BJ (cell line): ENCODE measurements at regions of chr2 and their contacts with region 1.

Region 1: GRCh38 chr2:11719230-11719977 is 27.0 kb upstream of the LPIN1 start:
- DNase-seq: no peak
- H3K4me3 ChIP-seq: no peak overlapping the region
- H3K27me3 ChIP-seq: peaks cover 16% of the 10 kb centered on the region
- CTCF ChIP-seq: no peak

Region 2: GRCh38 chr2:10533811-10534321 is 1185.5 kb before region 1 on chr2:
- CTCF ChIA-PET with region 1: no interaction called
- POLR2A ChIA-PET with region 1: no interaction called
- DNase-seq: no peak
- H3K4me3 ChIP-seq: no peak overlapping the region
- H3K27me3 ChIP-seq: no peaks in the 10 kb centered on the region
- CTCF ChIP-seq: no peak

Region 3: GRCh38 chr2:11610624-11611242 is 108.7 kb before region 1 on chr2:
- CTCF ChIA-PET with region 1: no interaction called
- POLR2A ChIA-PET with region 1: no interaction called
- DNase-seq: no peak
- H3K4me3 ChIP-seq: no peak overlapping the region
- H3K27me3 ChIP-seq: no peaks in the 10 kb centered on the region
- CTCF ChIP-seq: no peak

Region 4: GRCh38 chr2:11701751-11702301 is 17.6 kb before region 1 on chr2:
- CTCF ChIA-PET with region 1: no interaction called
- POLR2A ChIA-PET with region 1: no interaction called
- DNase-seq: no peak
- H3K4me3 ChIP-seq: no peak overlapping the region
- H3K27me3 ChIP-seq: no peaks in the 10 kb centered on the region
- CTCF ChIP-seq: no peak

Region 5: GRCh38 chr2:11784747-11785610 is 65.6 kb after region 1 on chr2:
- CTCF ChIA-PET with region 1: interaction called, 13 read pairs
- POLR2A ChIA-PET with region 1: no interaction called
- DNase-seq: no peak
- H3K4me3 ChIP-seq: peak overlapping the region; percentile 31
- H3K27me3 ChIP-seq: no peaks in the 10 kb centered on the region
- CTCF ChIP-seq: peak; percentile 99

Region 6: DNA sequence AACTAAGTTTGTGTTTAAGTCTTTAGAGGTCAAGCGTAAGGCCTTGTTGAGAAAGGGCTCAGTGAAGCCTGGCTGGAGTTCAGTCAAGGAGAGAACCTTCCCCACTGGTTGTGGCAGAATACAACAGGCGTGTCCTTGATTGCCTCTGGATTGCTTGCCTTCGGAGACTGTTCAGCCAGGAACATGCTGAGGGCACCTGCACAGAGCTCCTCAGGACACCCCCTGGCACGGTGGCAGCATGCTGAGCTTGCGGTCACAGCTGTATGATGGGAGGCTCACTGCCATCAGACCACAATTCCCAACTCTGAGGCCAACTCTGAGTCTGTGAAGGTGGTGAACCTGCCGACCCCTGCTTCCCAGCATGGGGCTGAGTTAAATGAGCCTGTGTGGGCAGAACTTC is 157.0 kb after region 1 on chr2:
- CTCF ChIA-PET with region 1: no interaction called
- POLR2A ChIA-PET with region 1: no interaction called
- DNase-seq: no peak
- H3K4me3 ChIP-seq: no peak overlapping the region
- H3K27me3 ChIP-seq: peaks cover 7% of the 10 kb centered on the region
- CTCF ChIP-seq: no peak